Heart right ventricle (tissue), 16 donors: ENCODE measurements at regions of chr12 and their contacts with region 1.

Region 1: DNA sequence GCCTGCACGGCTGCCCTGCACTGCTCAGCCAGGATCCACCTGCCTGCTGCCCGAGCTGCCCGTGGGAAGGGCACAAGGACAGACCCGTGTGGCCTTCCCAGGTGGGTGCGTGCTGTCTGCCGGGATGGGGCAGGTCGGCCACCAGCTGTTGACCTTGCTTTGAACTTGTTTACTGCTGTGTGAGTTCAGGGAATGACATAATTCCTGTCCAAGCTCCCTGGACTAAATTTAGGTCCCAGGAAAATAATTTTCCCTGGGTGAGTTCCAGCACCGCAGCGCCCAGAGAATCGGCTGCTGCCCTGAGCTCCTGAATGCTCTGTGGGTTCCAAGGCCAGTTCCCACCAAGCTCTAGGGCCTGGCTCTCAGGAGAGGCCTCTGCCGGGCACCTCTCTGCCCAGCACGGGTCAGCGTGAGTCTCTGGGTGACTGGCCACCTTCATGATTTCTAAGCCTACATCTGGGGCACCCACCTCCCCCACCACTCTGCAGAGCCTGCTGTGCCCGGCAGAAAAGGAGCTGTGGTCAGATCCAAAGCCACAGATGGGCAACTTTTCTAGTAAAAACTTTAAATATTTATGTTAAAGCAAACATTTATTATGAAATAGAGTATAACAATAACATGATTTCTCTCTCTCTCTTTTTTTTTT is 27.2 kb upstream of the MLXIP start:
- DNase-seq: peak; percentile 46 to 76
- ATAC-seq: peak; percentile 57 to 88 (median 82)
- H3K4me3 ChIP-seq: peak overlapping the region in 1 of 10 donors; percentile 16
- H3K27ac ChIP-seq: peak overlapping the region; percentile 83 to 91 (median 90)
- H3K4me1 ChIP-seq: peaks cover 12 to 33% (median 24%) of the 10 kb centered on the region in 9 donors
- H3K27me3 ChIP-seq: no peaks in the 10 kb centered on the region
- CTCF ChIP-seq: no peak

Region 2: GRCh38 chr12:121917979-121918678 is 133.2 kb before region 1 on chr12 and contains the start of gene CFAP251:
- intact Hi-C with region 1: loop called in 1 of 10 experiments (anchors 10 kb)
- DNase-seq: peak; percentile 90 to 96
- ATAC-seq: peak; percentile 90 to 98 (median 96)
- H3K4me3 ChIP-seq: peak within 1 kb of the TSS in 9 of 10 donors; percentile 35 to 58 (median 52)
- H3K27ac ChIP-seq: peak within 1 kb of the TSS in 7 of 10 donors; percentile 21 to 71 (median 44)
- H3K4me1 ChIP-seq: peaks cover 0 to 17% (median 5%) of the 10 kb centered on the region in 9 donors
- H3K27me3 ChIP-seq: no peaks in the 10 kb centered on the region
- CTCF ChIP-seq: peak; percentile 21 to 88 (median 67)
- total RNA-seq, gene CFAP251: 0.52 to 4.6 (median 1.9) TPM

Region 3: DNA sequence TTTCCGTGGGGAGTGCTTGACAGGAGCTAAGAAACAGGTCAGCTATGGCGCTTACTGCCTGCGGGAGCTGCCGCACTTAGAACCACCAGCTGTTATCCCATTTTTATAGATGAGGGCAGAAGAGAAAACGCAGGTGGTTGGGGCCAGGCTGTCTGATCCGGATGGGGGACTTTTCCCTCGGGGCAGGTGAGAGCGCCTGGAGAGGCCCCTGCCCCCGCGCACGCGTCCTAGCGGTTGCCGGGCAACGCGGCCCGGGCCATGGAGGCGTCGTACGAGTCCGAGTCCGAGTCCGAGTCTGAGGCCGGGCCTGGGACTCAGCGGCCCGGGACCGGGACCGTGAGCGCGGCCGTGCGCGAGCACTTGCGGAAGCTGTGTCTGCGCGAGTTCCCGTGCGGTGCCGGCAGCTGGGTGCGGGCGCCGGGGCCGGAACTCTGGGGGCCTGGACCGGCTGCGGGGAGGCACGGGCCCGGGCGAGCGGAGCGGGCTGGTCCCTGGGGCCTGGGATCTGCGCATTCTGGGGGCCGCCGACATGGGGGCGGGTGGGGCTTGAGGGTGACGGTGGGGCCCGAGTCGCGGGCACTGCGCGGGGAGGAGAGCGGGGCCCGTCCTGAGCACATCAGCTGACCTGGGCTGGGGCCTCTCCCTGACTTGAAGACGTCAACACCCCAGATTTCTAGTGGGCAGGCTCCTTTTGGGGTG is 131.7 kb after region 1 on chr12 and contains the start of gene LRRC43:
- intact Hi-C with region 1: loop called in 1 of 10 experiments (anchors 10 kb)
- DNase-seq: peak in 1 of 2 donors; percentile 34
- ATAC-seq: peak; percentile 44 to 82 (median 70)
- H3K4me3 ChIP-seq: peak within 1 kb of the TSS; percentile 27 to 60 (median 56)
- H3K27ac ChIP-seq: no peak within 1 kb of the TSS
- H3K4me1 ChIP-seq: peaks cover 0 to 17% (median 0%) of the 10 kb centered on the region in 9 donors
- H3K27me3 ChIP-seq: peaks cover 0 to 20% (median 3%) of the 10 kb centered on the region in 7 donors
- CTCF ChIP-seq: no peak
- total RNA-seq, gene LRRC43: 0.23 to 1.6 (median 0.74) TPM in 8 of 10 donors, not detected in the others

Region 4: DNA sequence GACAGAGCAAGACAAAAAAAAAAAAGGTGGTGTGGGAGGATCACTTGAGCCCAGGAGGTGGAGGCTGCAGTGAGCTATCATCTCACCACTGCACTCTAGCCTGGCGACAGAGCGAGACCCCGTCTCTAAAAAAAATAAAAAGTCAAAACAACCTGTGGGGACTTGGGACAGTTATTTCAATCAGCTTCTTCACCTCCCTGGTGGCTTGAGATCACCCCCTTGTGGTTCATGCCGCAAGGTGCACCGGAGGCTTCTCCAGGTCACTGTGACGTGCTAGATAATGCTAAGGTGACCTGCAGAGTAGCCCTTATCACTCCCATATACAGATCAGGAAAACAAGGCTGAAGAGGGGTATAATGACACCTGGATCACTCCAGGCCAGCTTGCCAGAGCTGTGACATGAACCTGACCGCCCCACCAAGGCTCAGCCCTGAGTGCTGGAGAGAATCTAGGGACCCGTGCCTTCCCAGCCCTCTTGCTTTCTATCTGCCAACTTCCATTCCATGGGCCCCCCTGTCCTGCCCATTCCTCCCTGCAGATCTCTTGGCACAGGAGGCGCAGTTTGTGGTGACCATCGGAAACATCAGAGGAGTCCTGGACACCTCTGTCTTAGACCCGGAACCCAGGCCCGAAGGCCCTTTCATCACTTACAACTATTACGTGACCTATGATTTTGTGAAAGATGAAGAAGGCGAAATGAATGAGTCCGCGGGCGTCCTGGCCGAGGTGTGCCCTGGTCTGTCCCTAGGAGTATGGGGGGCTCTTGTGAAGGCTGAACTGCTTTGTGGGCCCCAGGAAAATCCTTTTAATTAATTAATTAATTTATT is 139.7 kb after region 1 on chr12:
- intact Hi-C with region 1: loop called in 4 of 10 experiments (anchors 10 kb)
- DNase-seq: peak; percentile 22 to 44
- ATAC-seq: peak; percentile 20 to 83 (median 64)
- H3K4me3 ChIP-seq: no peak overlapping the region
- H3K27ac ChIP-seq: no peak overlapping the region
- H3K4me1 ChIP-seq: no peaks in the 10 kb centered on the region
- H3K27me3 ChIP-seq: no peaks in the 10 kb centered on the region
- CTCF ChIP-seq: peak; percentile 35 to 80 (median 66)

Region 5: GRCh38 chr12:122203301-122204166 is 152.2 kb after region 1 on chr12 and contains the start of gene B3GNT4:
- intact Hi-C with region 1: loop called in 5 of 10 experiments (anchors 5 to 10 kb)
- DNase-seq: peak; percentile 24 to 62
- ATAC-seq: peak in 7 of 8 donors; percentile 44 to 73 (median 62)
- H3K4me3 ChIP-seq: peak within 1 kb of the TSS; percentile 35 to 70 (median 58)
- H3K27ac ChIP-seq: no peak within 1 kb of the TSS
- H3K4me1 ChIP-seq: peaks cover 0 to 17% (median 10%) of the 10 kb centered on the region in 9 donors
- H3K27me3 ChIP-seq: peaks cover 7 to 72% (median 61%) of the 10 kb centered on the region in 7 donors
- CTCF ChIP-seq: no peak
- total RNA-seq, gene B3GNT4: not detected